HEK293T (cell line): ENCODE measurements at regions of chr17 and their contacts with region 1.

Region 1: GRCh38 chr17:56715613-56716357 is 117.9 kb downstream of the C17orf67 start:
- DNase-seq: peak; percentile 83

Region 2: GRCh38 chr17:56499799-56500388 is 215.9 kb before region 1 on chr17:
- CTCF ChIA-PET with region 1: interaction called, 50 read pairs
- POLR2A ChIA-PET with region 1: no interaction called
- DNase-seq: peak; percentile 31

Region 3: DNA sequence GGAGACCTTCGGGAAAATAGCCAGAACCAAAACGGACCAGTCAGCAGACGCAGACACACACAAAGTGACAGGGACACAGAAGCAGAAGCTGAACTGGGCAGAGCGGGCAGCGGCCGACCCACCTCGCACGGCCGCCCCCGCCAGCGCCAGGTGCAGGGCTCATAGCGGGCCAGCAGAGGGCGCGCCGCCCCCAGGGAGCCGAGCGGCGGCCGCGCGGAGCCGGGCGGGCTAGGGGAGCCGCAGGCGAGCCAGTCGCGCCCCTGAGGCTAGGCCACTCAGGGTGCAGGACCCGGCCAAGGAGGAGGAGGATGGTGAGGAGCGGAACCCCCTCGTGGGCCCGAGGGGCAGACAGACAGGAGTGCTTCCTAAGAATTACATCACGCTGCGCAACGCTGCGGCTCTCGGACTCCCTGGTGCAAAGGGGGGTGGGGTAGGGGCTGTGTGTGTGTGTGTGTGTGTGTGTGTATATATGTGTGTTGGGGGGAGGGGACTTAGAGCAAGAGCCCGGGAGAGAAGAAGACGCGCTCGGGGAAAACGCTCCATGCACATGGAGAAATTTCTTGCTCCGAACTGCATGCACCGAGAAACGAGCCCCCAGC is 123.2 kb before region 1 on chr17:
- CTCF ChIA-PET with region 1: interaction called, 12 read pairs
- POLR2A ChIA-PET with region 1: interaction called, 4 read pairs
- DNase-seq: peak; percentile 86

Region 4: GRCh38 chr17:56690486-56691291 is 25.1 kb before region 1 on chr17:
- CTCF ChIA-PET with region 1: interaction called, 13 read pairs
- POLR2A ChIA-PET with region 1: interaction called, 3 read pairs
- DNase-seq: no peak

Region 5: DNA sequence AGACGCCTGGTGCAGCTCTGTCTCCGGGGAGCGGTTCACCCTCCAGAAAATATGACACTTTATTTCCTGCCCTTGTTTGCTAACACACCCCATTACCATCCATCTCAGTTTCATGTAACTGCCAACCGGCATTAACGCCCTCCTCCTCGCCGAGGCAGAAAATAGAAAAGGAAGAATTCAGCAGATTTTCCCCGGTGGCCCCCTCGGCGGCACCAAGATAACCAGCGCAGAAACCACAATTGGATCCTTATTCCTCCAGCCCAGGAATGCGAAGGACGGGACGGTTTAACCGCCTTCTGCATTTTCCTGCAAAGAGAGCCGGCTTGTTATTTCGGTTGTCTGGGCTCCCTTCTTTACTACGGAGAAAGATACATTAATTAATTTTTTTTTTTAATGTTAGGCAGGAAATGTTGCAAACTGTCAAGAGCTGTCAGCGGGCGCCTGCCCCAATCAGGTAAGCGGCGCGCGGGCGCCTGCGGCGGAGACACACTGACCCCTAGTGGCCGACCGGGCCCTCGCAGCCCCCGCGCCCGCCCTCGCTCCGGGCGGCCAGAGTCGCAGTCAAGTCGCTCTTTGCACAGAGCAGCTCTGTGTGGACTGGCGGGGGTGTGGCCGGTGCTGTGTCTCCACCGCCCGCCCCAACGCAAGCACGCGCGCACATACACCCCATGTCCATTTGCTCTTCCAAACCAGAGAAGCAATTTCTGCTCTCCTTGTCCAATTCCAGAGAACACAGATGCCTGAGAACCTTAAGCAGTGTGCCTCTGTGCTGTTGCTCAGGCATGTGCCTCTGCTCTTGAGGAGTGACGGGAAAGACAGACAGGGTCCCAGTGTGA is 64.3 kb after region 1 on chr17:
- CTCF ChIA-PET with region 1: interaction called, 11 read pairs
- POLR2A ChIA-PET with region 1: no interaction called
- DNase-seq: peak; percentile 91